ENCODE measurements at regions of chr9 and their contacts with region 1.

Region 1: GRCh38 chr9:70639853-70640814 is 225.7 kb upstream of the KLF9 start:
- DNase-seq: peak in 1 of 2 donors; percentile 80
- H3K4me3 ChIP-seq: no peak overlapping the region
- H3K27ac ChIP-seq: no peak overlapping the region
- H3K4me1 ChIP-seq: no peaks in the 10 kb centered on the region
- H3K27me3 ChIP-seq: no peaks in the 10 kb centered on the region
- CTCF ChIP-seq: peak in 5 of 7 experiments; percentile 29 to 56 (median 46)
- EP300 ChIP-seq: no peak
- POLR2A ChIP-seq: no peak

Region 2: DNA sequence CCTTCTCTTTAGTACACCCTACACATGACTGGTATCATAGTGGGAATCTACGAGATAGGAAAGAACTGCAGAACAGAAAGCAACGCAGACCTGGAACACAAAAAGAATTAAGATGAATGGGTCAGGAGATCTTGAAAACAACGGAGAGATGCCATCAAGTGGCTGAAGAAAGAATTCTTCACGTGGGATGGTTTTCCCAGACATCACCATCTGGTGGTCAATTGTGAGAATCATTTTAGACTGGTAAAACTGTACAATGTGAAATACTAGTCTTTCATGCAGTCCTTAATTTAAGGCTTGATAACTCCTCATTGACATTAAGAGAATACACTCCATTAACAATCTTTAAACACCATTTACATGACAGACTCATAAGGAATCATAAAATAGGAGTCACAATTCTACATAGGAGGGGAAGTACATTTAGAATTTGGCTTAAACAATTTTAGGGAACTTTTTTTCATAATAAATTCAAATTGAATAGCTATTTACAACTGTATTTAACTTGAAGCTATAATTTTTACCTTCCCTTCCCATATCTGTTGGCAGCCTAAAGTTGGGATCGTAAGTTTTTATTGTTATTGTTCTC is 609.7 kb after region 1 on chr9:
- intact Hi-C with region 1: loop called (anchors 10 kb)
- DNase-seq: peak in 1 of 2 donors; percentile 81
- H3K4me3 ChIP-seq: no peak overlapping the region
- H3K27ac ChIP-seq: no peak overlapping the region
- H3K4me1 ChIP-seq: peaks cover 0 to 4% (median 0%) of the 10 kb centered on the region in 4 donors
- H3K27me3 ChIP-seq: no peaks in the 10 kb centered on the region
- CTCF ChIP-seq: peak in 5 of 7 experiments; percentile 34 to 59 (median 56)
- EP300 ChIP-seq: no peak
- POLR2A ChIP-seq: no peak